ENCODE measurements at regions of chr10 and their contacts with region 1.

Region 1: GRCh38 chr10:93115661-93116383 is 42.1 kb downstream of the CYP26A1 start:
- DNase-seq: peak; percentile 78
- H3K4me3 Mint-ChIP-seq: no peak overlapping the region
- H3K27ac Mint-ChIP-seq: no peak overlapping the region
- H3K4me1 Mint-ChIP-seq: peaks cover 12% of the 10 kb centered on the region
- H3K27me3 Mint-ChIP-seq: peaks cover 5% of the 10 kb centered on the region

Region 2: DNA sequence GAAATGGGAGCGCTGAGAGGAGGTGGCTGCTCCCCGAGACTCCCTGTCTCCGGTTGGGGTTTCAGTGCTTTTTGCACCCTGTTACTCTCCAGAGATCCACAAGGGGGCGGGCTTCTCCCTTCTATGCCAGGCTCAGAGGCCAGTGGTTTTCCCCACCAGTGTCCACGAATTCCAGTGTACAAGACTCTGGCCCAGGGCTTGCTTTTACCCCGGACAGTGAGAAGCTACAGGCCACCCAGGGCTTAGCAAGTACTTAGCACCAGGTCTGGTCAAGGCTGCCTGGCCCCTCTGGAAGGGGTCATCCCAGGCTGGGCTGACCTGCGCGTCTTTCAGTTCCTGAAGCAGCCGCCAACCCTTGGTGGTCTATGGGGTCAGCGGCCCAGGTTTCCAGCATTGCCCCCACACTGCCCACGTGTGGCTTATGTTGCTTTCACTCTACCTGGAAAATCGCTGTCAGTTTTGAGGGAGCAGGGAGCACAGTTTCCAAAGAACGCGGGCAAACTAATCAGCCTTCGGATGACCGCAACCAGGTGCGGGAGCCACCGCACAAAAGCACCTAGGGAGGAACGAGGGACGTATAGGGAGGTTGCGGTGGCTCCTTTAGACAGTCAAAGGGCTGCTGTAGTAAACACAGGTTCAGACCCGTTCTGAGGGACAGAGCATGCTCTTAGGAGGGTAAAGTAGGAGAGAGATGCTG is 35.3 kb before region 1 on chr10:
- CTCF ChIA-PET with region 1: interaction called, 13 read pairs
- POLR2A ChIA-PET with region 1: no interaction called
- intact Hi-C with region 1: no loop called
- DNase-seq: peak; percentile 68
- H3K4me3 Mint-ChIP-seq: no peak overlapping the region
- H3K27ac Mint-ChIP-seq: no peak overlapping the region
- H3K4me1 Mint-ChIP-seq: peaks cover 7% of the 10 kb centered on the region
- H3K27me3 Mint-ChIP-seq: peaks cover 40% of the 10 kb centered on the region

Region 3: GRCh38 chr10:93103953-93104352 is 11.9 kb before region 1 on chr10:
- CTCF ChIA-PET with region 1: interaction called, 14 read pairs
- POLR2A ChIA-PET with region 1: no interaction called
- intact Hi-C with region 1: no loop called
- DNase-seq: no peak
- H3K4me3 Mint-ChIP-seq: no peak overlapping the region
- H3K27ac Mint-ChIP-seq: no peak overlapping the region
- H3K4me1 Mint-ChIP-seq: no peaks in the 10 kb centered on the region
- H3K27me3 Mint-ChIP-seq: peaks cover 3% of the 10 kb centered on the region

Region 4: DNA sequence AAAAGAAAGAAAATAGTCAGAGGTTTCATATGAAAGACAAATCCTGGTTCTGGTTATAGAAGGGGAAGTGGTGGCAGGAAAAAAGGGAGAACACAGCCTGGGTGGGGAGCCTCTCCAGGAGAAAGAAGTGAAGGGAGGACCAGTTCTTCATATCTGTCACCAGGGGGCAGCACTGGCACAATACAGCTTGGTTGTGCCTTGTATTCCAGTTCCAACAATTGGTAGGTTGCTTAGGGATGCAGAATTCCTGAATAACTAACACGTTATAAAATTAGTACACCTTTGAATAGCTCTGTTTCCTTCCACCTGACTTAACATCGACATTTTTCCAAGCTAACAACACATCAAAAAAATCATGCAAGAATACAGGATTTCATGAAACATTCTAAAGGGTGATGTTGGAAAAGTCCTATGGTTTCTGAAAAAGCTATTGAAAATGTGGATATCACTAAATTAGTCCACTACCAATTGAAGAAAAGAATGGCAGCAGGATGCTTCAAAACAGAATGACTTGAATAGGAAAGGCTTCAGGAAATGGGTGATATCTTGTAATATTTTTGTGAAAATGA is 10.7 kb after region 1 on chr10:
- CTCF ChIA-PET with region 1: interaction called, 13 read pairs
- POLR2A ChIA-PET with region 1: no interaction called
- intact Hi-C with region 1: no loop called
- DNase-seq: peak; percentile 14
- H3K4me3 Mint-ChIP-seq: no peak overlapping the region
- H3K27ac Mint-ChIP-seq: no peak overlapping the region
- H3K4me1 Mint-ChIP-seq: peaks cover 27% of the 10 kb centered on the region
- H3K27me3 Mint-ChIP-seq: no peaks in the 10 kb centered on the region

Region 5: GRCh38 chr10:93245779-93246178 is 130.0 kb after region 1 on chr10:
- CTCF ChIA-PET with region 1: no interaction called
- POLR2A ChIA-PET with region 1: no interaction called
- intact Hi-C with region 1: no loop called
- DNase-seq: no peak
- H3K4me3 Mint-ChIP-seq: no peak overlapping the region
- H3K27ac Mint-ChIP-seq: no peak overlapping the region
- H3K4me1 Mint-ChIP-seq: no peaks in the 10 kb centered on the region
- H3K27me3 Mint-ChIP-seq: peaks cover 5% of the 10 kb centered on the region

Region 6: GRCh38 chr10:93288654-93289634 is 173.1 kb after region 1 on chr10:
- CTCF ChIA-PET with region 1: interaction called, 19 read pairs
- POLR2A ChIA-PET with region 1: no interaction called
- intact Hi-C with region 1: loop called (anchors 1 kb)
- DNase-seq: peak; percentile 61
- H3K4me3 Mint-ChIP-seq: no peak overlapping the region
- H3K27ac Mint-ChIP-seq: no peak overlapping the region
- H3K4me1 Mint-ChIP-seq: no peaks in the 10 kb centered on the region
- H3K27me3 Mint-ChIP-seq: no peaks in the 10 kb centered on the region

Region 7: DNA sequence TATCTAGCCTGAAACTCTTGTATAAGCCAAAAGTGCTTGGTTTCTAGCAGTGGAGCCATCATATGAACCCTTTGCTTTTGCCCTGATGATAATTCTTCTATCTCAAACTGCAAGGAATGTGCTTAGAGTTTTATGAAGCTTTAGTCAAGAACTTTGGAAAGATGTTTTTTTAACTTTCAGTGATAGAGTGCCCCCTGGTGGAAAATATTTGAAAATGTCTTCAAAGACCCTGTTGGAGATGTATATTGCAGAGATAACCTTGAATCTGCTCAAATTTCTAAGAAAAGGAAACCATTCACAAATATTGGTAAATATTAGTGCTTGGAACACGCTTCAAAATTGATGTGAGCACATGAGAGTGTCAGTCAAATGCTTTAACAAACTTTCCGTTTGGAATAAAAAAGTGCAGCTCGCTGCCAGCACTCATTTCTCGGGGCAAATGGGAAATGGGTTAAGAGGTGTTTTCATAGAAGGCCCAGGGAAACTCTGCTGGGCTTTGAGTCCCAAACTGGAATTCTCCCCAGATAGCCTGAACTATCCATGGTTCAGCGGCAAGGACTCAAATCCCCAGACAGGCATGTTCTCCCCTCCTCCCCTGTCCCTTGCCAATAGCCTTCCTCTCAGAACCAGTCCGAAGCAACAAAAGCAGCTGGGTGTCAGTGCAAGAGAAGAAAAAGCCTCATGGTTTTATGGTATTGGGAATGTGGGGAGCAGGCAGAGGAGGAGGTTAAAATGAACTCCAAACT is 237.0 kb after region 1 on chr10:
- CTCF ChIA-PET with region 1: interaction called, 12 read pairs
- POLR2A ChIA-PET with region 1: no interaction called
- intact Hi-C with region 1: loop called (anchors 1 kb)
- DNase-seq: no peak
- H3K4me3 Mint-ChIP-seq: no peak overlapping the region
- H3K27ac Mint-ChIP-seq: no peak overlapping the region
- H3K4me1 Mint-ChIP-seq: peaks cover 3% of the 10 kb centered on the region
- H3K27me3 Mint-ChIP-seq: peaks cover 11% of the 10 kb centered on the region